Heart right ventricle (tissue), 16 donors: ENCODE measurements at regions of chr10 and their contacts with region 1.

Region 1: DNA sequence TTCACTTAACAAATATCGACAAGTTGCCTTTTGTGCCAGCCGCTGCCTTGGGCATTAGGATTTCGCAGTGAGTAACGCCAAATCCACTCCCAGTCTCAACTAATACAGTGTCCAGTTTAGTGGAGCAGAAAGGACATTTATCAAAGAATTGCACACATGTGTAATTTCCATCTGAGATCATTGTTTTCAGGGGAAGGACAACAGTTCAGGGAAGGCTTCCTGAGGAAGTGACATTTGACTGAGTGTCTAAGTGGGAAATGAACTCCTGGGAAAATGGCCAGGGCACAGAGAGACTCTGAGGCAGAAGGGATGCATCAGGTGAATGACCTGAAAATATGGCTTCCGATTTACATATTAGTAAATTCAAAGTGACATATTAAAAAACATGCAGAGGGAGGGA is 89.4 kb downstream of the ITGA8 start:
- DNase-seq: peak in 1 of 2 donors; percentile 50
- ATAC-seq: peak; percentile 41 to 91 (median 78)
- H3K4me3 ChIP-seq: no peak overlapping the region
- H3K27ac ChIP-seq: peak overlapping the region in 2 of 10 donors; percentile 11 to 38
- H3K4me1 ChIP-seq: peaks cover 0 to 21% (median 6%) of the 10 kb centered on the region in 9 donors
- H3K27me3 ChIP-seq: no peaks in the 10 kb centered on the region
- CTCF ChIP-seq: no peak

Region 2: GRCh38 chr10:15603446-15604011 is 26.8 kb before region 1 on chr10:
- intact Hi-C with region 1: loop called in 1 of 10 experiments (anchors 2 kb)
- DNase-seq: no peak
- ATAC-seq: peak in 3 of 8 donors; percentile 12 to 63 (median 50)
- H3K4me3 ChIP-seq: no peak overlapping the region
- H3K27ac ChIP-seq: peak overlapping the region in 3 of 10 donors; percentile 13 to 55 (median 38)
- H3K4me1 ChIP-seq: peaks cover 0 to 43% (median 0%) of the 10 kb centered on the region in 9 donors
- H3K27me3 ChIP-seq: no peaks in the 10 kb centered on the region
- CTCF ChIP-seq: no peak

Region 3: GRCh38 chr10:15972736-15973462 is 342.5 kb after region 1 on chr10:
- intact Hi-C with region 1: no loop called
- DNase-seq: no peak
- ATAC-seq: no peak
- H3K4me3 ChIP-seq: no peak overlapping the region
- H3K27ac ChIP-seq: no peak overlapping the region
- H3K4me1 ChIP-seq: no peaks in the 10 kb centered on the region
- H3K27me3 ChIP-seq: peaks cover 0 to 4% (median 0%) of the 10 kb centered on the region in 7 donors
- CTCF ChIP-seq: no peak